ENCODE measurements at regions of chr13 and their contacts with region 1.

Region 1: DNA sequence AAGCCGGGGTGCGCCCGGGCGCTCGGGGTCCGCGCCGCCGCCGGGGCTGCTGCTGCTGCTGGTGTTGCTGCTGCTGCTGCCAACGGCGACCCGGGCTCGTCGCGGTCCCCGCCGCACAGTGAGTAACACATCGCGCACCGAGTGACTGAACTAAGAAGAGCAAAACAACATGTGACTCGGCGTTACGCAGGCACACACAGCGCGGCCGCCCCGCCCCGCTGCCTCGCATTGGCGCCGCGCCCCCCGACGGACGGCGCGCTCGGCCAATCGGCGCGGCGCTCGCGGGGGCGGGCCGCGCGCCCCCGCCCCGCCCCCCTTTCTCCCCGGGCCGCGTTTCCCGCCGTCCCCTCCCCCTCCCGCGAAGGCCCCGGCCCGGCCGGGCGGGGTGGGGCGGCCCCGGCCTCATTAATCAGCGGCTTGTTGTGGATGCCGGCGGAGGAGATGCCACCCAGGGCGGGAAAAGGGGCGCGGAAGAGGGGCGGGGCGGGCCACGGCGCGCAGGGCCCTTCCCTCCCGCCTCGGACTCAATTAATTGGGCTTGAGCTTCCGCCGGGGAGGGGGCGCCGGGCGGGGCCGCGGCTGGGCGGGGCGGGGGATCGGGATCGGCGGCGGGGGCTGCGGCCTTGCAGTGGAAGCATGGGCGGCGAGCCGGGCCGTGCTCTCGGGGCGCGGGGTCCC is at the start of gene IRS2:
- H3K4me3 Mint-ChIP-seq: peak within 1 kb of the TSS; percentile 85
- H3K27ac Mint-ChIP-seq: peak within 1 kb of the TSS; percentile 64
- H3K4me1 Mint-ChIP-seq: peaks cover 37% of the 10 kb centered on the region
- H3K27me3 Mint-ChIP-seq: peaks cover 3% of the 10 kb centered on the region

Region 2: GRCh38 chr13:108218044-108218974 is 1568.3 kb before region 1 on chr13 and contains the start of gene ABHD13:
- intact Hi-C with region 1: loop called (anchors 10 kb)
- H3K4me3 Mint-ChIP-seq: peak within 1 kb of the TSS; percentile 100
- H3K27ac Mint-ChIP-seq: peak within 1 kb of the TSS; percentile 100
- H3K4me1 Mint-ChIP-seq: peaks cover 29% of the 10 kb centered on the region
- H3K27me3 Mint-ChIP-seq: no peaks in the 10 kb centered on the region

Region 3: DNA sequence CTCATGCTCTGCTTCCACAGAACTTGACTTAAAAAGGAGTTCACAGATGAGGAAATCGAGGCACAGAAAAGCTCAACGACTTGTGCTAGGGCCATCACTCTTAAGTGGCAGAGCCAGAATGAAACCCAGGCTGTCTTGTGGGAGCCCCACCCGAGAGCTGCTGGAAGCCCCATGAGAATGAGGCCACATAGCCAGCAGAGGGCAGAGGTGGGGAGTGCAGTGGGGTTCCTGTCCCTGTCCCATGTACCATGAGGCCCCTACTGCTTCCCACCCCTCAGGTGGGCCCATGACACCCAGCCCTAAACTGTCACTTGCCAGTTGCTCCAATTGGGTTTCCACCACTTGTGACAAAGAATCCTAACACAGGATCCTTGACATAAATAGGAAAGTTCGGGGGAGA is 176.1 kb before region 1 on chr13:
- intact Hi-C with region 1: loop called (anchors 2 kb)
- H3K4me3 Mint-ChIP-seq: no peak overlapping the region
- H3K27ac Mint-ChIP-seq: no peak overlapping the region
- H3K4me1 Mint-ChIP-seq: no peaks in the 10 kb centered on the region
- H3K27me3 Mint-ChIP-seq: no peaks in the 10 kb centered on the region

Region 4: DNA sequence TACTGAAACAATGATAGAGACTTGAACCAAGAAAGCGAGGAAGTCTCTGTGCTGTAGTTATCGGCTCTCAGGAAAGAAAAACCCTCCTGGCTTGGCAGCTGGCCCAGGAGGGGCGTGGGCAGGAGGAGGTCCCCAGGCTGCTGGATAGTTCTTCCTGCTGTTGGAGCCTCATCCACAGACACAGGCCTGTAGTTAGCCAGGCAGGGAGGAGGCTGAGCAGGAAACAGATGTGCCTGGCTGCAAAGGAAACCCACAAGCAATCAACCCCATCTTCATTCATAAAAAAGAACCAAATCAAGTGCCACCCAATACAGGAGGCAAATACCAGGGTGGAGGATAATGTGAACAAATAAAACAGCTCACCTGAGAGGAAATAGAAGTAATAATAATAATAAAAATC is 86.4 kb before region 1 on chr13:
- intact Hi-C with region 1: loop called (anchors 10 kb)
- H3K4me3 Mint-ChIP-seq: no peak overlapping the region
- H3K27ac Mint-ChIP-seq: peak overlapping the region; percentile 47
- H3K4me1 Mint-ChIP-seq: peaks cover 52% of the 10 kb centered on the region
- H3K27me3 Mint-ChIP-seq: no peaks in the 10 kb centered on the region

Region 5: DNA sequence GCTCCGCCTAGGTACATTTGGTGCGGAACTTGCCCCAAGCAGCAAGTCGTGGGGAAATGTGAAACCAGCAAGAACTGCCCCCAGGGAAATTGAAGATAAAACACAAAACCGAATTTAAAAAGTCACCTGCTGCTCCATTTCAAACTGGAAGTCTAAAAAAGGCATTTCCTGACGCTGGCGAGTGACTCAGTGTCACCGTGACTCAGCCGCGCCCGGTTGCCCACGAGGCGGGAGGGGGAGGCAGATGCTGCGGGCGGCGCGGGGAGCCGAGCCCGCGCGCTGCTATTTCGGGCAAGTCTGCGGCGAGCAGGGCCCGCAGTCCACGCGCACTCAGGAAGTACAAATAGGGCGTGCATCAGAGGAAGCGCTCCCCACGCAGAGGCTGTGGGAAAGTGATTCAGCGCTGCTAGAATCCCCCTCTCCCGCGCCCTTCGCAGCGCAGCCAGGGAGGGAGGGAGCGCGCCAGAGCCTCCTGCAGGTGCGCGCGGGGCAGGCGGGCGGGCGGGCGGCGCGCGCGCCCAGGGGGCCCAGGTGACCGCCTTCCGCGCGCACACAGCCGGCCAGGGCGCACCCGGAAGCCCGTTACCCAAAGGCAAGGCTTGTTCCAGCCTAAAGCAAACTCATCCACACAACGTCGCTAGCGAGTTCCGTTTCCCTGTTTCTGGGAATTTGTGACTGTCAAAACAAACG is 351.6 kb after region 1 on chr13:
- intact Hi-C with region 1: loop called (anchors 10 kb)
- H3K4me3 Mint-ChIP-seq: peak overlapping the region; percentile 89
- H3K27ac Mint-ChIP-seq: peak overlapping the region; percentile 91
- H3K4me1 Mint-ChIP-seq: peaks cover 18% of the 10 kb centered on the region
- H3K27me3 Mint-ChIP-seq: peaks cover 3% of the 10 kb centered on the region

Measured in dendritic cell treated with granulocyte-macrophage colony-stimulating factor and Interleukin-4, amounts not matched to agents 40 ng/mL and 50 ng/mL, for 4 days (primary cell).